Activated T-helper 1 cell treated with anti-CD3 and anti-CD28 coated beads, Interleukin-12 subunit alpha, Interleukin-12 subunit beta, Interleukin-2, Interleukin-4 antibody, amounts not matched to agents 30 ng/mL and 10 ng/mL and 1 ng/mL, durations not matched to agents 14 hours and 24 hours and 36 hours (primary cell): ENCODE measurements at regions of chr1 and their contacts with region 1.

Region 1: DNA sequence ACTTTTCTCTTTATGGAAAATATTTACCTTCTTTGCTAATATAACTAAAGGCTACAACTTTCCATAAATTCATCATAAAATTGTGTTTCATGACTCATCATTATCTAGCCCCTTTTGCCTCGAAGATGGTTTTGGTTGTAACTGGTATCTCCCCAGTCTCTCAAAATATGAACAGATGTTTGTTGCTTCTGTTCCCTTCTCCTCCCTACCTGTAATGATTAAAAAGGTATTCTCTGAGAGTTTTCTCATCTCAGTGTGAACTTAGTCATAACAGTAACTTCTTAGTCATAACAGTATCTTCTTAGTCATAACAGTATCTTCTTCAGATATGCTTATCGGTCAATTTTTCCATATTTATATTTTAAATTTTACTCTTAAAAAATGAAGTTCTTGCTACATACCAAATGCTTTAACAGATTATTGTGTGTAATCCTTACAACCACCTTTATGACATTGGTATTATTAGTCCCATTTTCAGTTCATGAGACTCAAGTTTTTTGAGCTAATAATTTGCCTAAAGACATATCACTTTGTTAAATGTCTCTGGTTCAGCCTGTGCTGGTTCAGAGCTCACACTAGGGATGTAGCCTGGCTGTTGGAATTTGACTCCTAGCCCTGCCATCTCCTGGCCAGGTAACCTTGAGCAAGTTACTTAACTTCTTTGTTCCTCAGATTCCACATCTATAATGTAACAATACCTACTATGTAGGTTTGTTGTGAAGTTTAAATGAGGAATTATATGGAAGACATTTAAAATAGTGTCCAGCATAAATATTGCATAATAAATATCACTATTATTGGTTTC is 32.6 kb downstream of the ATP1B1 start:
- DNase-seq: no peak
- H3K4me3 Mint-ChIP-seq: no peak overlapping the region
- H3K27ac Mint-ChIP-seq: peak overlapping the region; percentile 80
- H3K4me1 Mint-ChIP-seq: peaks cover 20% of the 10 kb centered on the region
- H3K27me3 Mint-ChIP-seq: peaks cover 4% of the 10 kb centered on the region

Region 2: DNA sequence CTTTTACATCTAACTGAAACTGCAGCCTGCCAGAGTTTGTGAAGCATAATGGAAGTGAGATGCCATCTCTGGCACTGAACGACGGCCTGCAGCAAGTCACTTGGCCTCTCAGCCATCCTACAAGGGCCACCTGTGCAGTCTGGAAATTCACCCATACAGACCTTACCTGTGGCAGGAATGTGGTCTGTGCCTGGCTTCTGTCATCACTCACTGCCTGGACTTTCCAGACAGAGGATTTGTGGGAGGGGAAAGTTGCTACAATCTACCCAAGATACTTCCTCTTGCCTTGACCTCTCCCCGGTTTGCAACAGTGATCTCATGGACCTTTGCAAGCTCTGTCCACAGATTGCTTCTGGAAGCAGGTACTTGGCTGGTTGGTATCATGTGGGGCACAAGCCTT is 91.0 kb before region 1 on chr1:
- intact Hi-C with region 1: loop called (anchors 2 kb)
- DNase-seq: no peak
- H3K4me3 Mint-ChIP-seq: peak overlapping the region; percentile 23
- H3K27ac Mint-ChIP-seq: peak overlapping the region; percentile 69
- H3K4me1 Mint-ChIP-seq: peaks cover 73% of the 10 kb centered on the region
- H3K27me3 Mint-ChIP-seq: no peaks in the 10 kb centered on the region

Region 3: DNA sequence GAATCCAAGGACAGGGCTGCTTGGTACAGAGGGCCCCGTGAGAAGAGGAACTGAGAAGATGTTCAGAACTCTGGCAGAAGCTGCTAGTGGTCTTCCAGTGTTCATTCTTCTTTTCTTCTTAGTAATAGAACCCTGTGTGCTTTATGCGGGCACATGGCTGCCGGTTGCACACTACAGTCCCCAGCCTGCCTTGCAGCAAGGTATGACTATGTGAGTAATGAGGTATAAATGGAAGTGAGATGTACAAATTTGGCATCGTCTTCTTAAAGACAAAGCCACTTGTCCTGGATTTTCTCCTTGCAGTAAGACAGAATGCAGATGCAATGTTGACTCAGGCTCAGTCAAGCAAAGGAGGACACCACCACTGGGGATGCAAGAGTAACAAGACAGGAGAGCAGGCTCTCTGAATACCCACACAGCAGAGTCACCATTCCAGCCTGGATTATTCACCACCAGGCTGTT is 47.6 kb before region 1 on chr1:
- intact Hi-C with region 1: loop called (anchors 1 kb)
- DNase-seq: no peak
- H3K4me3 Mint-ChIP-seq: no peak overlapping the region
- H3K27ac Mint-ChIP-seq: no peak overlapping the region
- H3K4me1 Mint-ChIP-seq: peaks cover 12% of the 10 kb centered on the region
- H3K27me3 Mint-ChIP-seq: peaks cover 6% of the 10 kb centered on the region

Region 4: GRCh38 chr1:169163059-169163458 is 24.0 kb after region 1 on chr1:
- intact Hi-C with region 1: loop called (anchors 1 kb)
- DNase-seq: no peak
- H3K4me3 Mint-ChIP-seq: no peak overlapping the region
- H3K27ac Mint-ChIP-seq: no peak overlapping the region
- H3K4me1 Mint-ChIP-seq: peaks cover 8% of the 10 kb centered on the region
- H3K27me3 Mint-ChIP-seq: no peaks in the 10 kb centered on the region

Region 5: GRCh38 chr1:169326956-169327268 is 187.8 kb after region 1 on chr1:
- intact Hi-C with region 1: loop called (anchors 2 kb)
- DNase-seq: no peak
- H3K4me3 Mint-ChIP-seq: no peak overlapping the region
- H3K27ac Mint-ChIP-seq: peak overlapping the region; percentile 31
- H3K4me1 Mint-ChIP-seq: peaks cover 13% of the 10 kb centered on the region
- H3K27me3 Mint-ChIP-seq: no peaks in the 10 kb centered on the region

Region 6: GRCh38 chr1:169390303-169390702 is 251.2 kb after region 1 on chr1:
- intact Hi-C with region 1: loop called (anchors 1 kb)
- DNase-seq: no peak
- H3K4me3 Mint-ChIP-seq: no peak overlapping the region
- H3K27ac Mint-ChIP-seq: peak overlapping the region; percentile 29
- H3K4me1 Mint-ChIP-seq: peaks cover 21% of the 10 kb centered on the region
- H3K27me3 Mint-ChIP-seq: no peaks in the 10 kb centered on the region

Region 7: DNA sequence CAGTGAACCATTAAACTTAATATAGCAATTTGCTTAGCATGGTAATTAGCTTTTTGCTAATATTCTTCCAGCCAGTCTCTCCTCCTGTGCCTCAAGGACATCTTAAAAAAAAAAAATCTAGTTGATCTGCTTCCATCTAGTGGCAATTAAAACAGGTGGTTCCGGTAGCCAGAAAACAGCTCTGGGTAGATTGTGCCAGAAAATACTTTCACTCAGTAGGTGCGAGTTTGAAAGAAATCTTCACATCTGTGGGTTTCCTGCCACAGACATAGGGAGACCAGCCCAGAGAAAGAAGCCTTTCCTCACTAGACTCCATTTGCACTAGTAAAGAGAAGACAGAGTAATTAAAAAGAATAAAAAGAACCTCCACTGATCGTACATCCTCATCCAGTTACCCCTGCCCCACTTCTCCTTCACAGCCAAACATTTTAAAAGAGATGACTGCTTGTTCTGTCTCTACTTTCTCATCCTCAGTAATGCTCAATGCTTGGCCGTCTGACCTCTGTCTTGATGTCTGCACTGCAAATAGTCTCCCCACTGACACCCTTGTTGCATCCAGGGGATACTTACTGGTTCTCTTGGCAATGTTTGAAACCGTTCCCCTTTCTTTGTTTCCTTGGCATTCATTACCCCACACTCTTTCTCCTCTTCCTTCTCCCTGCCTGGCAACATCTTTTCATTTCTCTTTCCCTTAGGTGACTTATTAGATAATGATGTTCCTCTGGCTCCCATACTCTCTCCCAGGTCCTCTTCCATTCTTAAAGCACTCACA is 555.4 kb after region 1 on chr1:
- intact Hi-C with region 1: no loop called
- DNase-seq: peak; percentile 56
- H3K4me3 Mint-ChIP-seq: peak overlapping the region; percentile 28
- H3K27ac Mint-ChIP-seq: peak overlapping the region; percentile 90
- H3K4me1 Mint-ChIP-seq: peaks cover 96% of the 10 kb centered on the region
- H3K27me3 Mint-ChIP-seq: no peaks in the 10 kb centered on the region